Activated B cell treated with CpG ODN at 0.5 μM for 24 hours (primary cell): ENCODE measurements at regions of chr5 and their contacts with region 1.

Region 1: DNA sequence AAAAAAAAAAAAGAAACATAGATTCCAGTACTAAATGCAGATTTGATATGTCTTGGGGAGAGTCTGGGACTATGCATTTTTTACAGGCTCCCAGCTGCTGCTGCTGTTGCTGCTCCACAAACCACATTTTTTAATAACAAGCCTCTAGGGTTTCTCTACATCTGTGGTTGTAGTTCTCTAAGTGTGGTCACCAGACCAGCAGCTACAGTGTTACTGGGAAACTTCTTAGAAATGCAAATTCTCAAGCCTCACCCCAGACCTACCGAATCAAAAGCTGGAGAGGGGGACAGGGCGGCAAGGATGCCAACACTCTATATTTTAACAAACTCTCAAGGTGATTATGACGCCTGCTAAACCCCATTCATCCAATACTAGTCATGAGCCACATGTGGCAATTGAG is 293.4 kb upstream of the PTGER4 start:
- DNase-seq: no peak
- ATAC-seq: peak; percentile 78
- H3K4me3 Mint-ChIP-seq: peak overlapping the region; percentile 25
- H3K27ac Mint-ChIP-seq: peak overlapping the region; percentile 66
- H3K4me1 Mint-ChIP-seq: peaks cover 50% of the 10 kb centered on the region
- H3K27me3 Mint-ChIP-seq: no peaks in the 10 kb centered on the region
- CTCF ChIP-seq: no peak

Region 2: GRCh38 chr5:40033411-40033810 is 352.9 kb before region 1 on chr5:
- CTCF ChIA-PET with region 1: no interaction called
- POLR2A ChIA-PET with region 1: no interaction called
- intact Hi-C with region 1: loop called (anchors 5 kb)
- DNase-seq: peak; percentile 31
- ATAC-seq: peak; percentile 98
- H3K4me3 Mint-ChIP-seq: peak overlapping the region; percentile 21
- H3K27ac Mint-ChIP-seq: peak overlapping the region; percentile 80
- H3K4me1 Mint-ChIP-seq: peaks cover 36% of the 10 kb centered on the region
- H3K27me3 Mint-ChIP-seq: no peaks in the 10 kb centered on the region
- CTCF ChIP-seq: no peak

Region 3: DNA sequence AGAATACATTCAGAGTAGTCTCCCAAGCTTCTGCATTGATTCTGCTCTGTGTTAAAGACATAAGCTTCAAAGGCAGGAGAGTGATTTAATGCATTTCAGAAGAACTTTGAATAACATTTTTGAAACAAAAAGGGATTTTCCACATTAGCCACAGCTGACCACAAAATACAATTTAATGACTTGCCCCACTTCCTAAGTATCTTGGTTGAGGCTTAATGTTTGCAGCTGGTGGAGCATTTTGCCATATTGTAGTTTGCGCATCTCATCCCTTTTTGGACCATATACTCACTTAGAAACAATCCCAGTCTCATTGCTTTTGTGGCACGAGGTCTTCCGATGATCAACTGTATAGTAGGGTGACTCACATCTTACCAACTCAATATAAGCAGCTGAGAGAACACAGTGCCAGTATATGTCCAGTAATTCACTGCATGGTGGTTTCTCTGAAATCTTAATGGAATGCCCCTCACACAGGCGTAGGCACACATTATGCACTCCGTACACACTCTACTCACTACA is 162.3 kb before region 1 on chr5:
- CTCF ChIA-PET with region 1: no interaction called
- POLR2A ChIA-PET with region 1: no interaction called
- intact Hi-C with region 1: loop called (anchors 5 kb)
- DNase-seq: no peak
- ATAC-seq: peak; percentile 63
- H3K4me3 Mint-ChIP-seq: peak overlapping the region; percentile 21
- H3K27ac Mint-ChIP-seq: peak overlapping the region; percentile 79
- H3K4me1 Mint-ChIP-seq: peaks cover 45% of the 10 kb centered on the region
- H3K27me3 Mint-ChIP-seq: peaks cover 5% of the 10 kb centered on the region
- CTCF ChIP-seq: no peak

Region 4: GRCh38 chr5:40277161-40277906 is 109.0 kb before region 1 on chr5:
- CTCF ChIA-PET with region 1: interaction called, 3 read pairs
- POLR2A ChIA-PET with region 1: no interaction called
- intact Hi-C with region 1: loop called (anchors 1 kb)
- DNase-seq: no peak
- ATAC-seq: peak; percentile 90
- H3K4me3 Mint-ChIP-seq: peak overlapping the region; percentile 30
- H3K27ac Mint-ChIP-seq: peak overlapping the region; percentile 77
- H3K4me1 Mint-ChIP-seq: peaks cover 30% of the 10 kb centered on the region
- H3K27me3 Mint-ChIP-seq: no peaks in the 10 kb centered on the region
- CTCF ChIP-seq: no peak

Region 5: DNA sequence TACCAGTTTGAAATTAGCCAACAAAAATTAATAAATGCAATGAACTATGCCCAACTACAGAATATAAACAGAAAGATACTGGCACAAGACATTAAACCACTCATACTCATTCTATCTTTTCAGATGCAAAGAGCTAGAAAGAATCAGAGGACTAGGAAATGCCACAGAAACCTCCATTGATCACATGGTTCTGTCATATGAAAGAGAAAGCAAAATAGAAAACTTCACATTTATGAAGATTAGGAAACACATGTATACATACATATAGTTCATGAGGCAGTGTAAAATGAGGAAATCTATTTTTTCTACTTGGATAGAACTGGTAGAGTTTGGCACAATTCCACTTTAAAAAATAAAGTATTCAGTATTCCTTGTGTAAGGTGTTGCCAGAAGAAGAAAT is 18.3 kb after region 1 on chr5:
- CTCF ChIA-PET with region 1: interaction called, 7 read pairs
- POLR2A ChIA-PET with region 1: interaction called, 9 read pairs
- intact Hi-C with region 1: loop called (anchors 1 kb)
- DNase-seq: no peak
- ATAC-seq: peak; percentile 32
- H3K4me3 Mint-ChIP-seq: peak overlapping the region; percentile 21
- H3K27ac Mint-ChIP-seq: peak overlapping the region; percentile 38
- H3K4me1 Mint-ChIP-seq: peaks cover 56% of the 10 kb centered on the region
- H3K27me3 Mint-ChIP-seq: no peaks in the 10 kb centered on the region
- CTCF ChIP-seq: no peak

Region 6: DNA sequence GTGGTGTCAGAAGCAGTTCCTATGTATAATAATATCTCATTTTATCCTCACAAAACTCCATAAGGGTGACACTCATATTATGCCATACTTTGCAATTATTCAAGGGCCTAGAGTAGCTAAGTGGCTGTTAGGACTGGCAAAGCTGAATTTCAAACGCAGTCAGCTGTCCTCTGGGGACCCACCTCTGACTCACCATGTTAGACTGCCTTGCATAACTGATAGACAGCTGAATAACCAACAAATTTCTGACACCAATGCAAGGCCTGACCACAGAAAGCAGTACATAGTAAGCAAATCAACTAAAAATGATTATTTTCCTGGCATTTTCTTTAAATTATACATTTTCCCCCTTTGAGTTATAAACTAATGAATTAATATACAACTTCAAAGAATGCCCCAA is 41.8 kb after region 1 on chr5:
- CTCF ChIA-PET with region 1: no interaction called
- POLR2A ChIA-PET with region 1: interaction called, 4 read pairs
- intact Hi-C with region 1: loop called (anchors 2 kb)
- DNase-seq: no peak
- ATAC-seq: peak; percentile 98
- H3K4me3 Mint-ChIP-seq: no peak overlapping the region
- H3K27ac Mint-ChIP-seq: no peak overlapping the region
- H3K4me1 Mint-ChIP-seq: peaks cover 17% of the 10 kb centered on the region
- H3K27me3 Mint-ChIP-seq: no peaks in the 10 kb centered on the region
- CTCF ChIP-seq: no peak

Region 7: GRCh38 chr5:40551496-40552491 is 165.5 kb after region 1 on chr5:
- CTCF ChIA-PET with region 1: no interaction called
- POLR2A ChIA-PET with region 1: no interaction called
- intact Hi-C with region 1: no loop called
- DNase-seq: no peak
- ATAC-seq: no peak
- H3K4me3 Mint-ChIP-seq: no peak overlapping the region
- H3K27ac Mint-ChIP-seq: no peak overlapping the region
- H3K4me1 Mint-ChIP-seq: peaks cover 8% of the 10 kb centered on the region
- H3K27me3 Mint-ChIP-seq: no peaks in the 10 kb centered on the region
- CTCF ChIP-seq: no peak